Adrenal gland (tissue), 19 donors: ENCODE measurements at regions of chr2 and their contacts with region 1.

Region 1: GRCh38 chr2:24084386-24085361 is at the start of gene TP53I3:
- DNase-seq: peak; percentile 89 to 94 (median 92)
- H3K4me3 ChIP-seq: peak within 1 kb of the TSS in 3 of 4 donors; percentile 47 to 68 (median 52)
- H3K27ac ChIP-seq: peak within 1 kb of the TSS; percentile 45 to 95 (median 80)
- H3K4me1 ChIP-seq: peaks cover 6 to 19% of the 10 kb centered on the region in 2 donors
- H3K27me3 ChIP-seq: no peaks in the 10 kb centered on the region
- CTCF ChIP-seq: peak; percentile 77 to 98 (median 94)
- POLR2A ChIP-seq: peak; percentile 79 to 87
- total RNA-seq, gene TP53I3: 18.4 to 31.8 (median 26.9) TPM

Region 2: GRCh38 chr2:23824777-23825212 is 259.9 kb before region 1 on chr2:
- intact Hi-C with region 1: loop called (anchors 10 kb)
- DNase-seq: peak in 1 of 7 donors; percentile 31
- H3K4me3 ChIP-seq: no peak overlapping the region
- H3K27ac ChIP-seq: no peak overlapping the region
- H3K4me1 ChIP-seq: no peaks in the 10 kb centered on the region
- H3K27me3 ChIP-seq: no peaks in the 10 kb centered on the region
- CTCF ChIP-seq: peak; percentile 59 to 76 (median 67)
- POLR2A ChIP-seq: no peak